Mammary epithelial cell (primary cell): ENCODE measurements at regions of chr3 and their contacts with region 1.

Region 1: DNA sequence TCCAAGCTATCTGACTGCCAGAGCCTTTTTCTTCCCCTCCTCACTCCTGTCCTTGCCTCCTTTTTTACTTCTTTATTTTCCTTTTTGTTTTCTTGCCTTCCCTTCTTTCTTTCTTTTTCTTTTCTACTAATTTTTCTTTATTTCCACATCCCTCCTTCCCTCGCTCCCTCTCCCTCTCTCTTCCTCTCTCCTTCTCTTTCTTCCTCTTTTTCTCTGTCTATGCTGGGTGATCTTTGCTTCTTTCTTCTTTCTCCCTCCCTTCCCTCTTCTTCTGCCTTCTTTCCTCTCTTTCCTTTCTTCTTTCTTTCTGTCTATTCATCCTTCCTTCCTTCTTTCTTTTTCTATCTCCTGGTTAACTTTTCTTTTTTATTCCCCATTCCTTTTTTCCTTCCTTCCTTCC is 564.8 kb downstream of the NSUN3 start:
- DNase-seq: no peak
- H3K4me3 ChIP-seq: no peak overlapping the region
- H3K27ac ChIP-seq: no peak overlapping the region
- H3K4me1 ChIP-seq: no peaks in the 10 kb centered on the region
- H3K27me3 ChIP-seq: no peaks in the 10 kb centered on the region
- CTCF ChIP-seq: no peak

Region 2: DNA sequence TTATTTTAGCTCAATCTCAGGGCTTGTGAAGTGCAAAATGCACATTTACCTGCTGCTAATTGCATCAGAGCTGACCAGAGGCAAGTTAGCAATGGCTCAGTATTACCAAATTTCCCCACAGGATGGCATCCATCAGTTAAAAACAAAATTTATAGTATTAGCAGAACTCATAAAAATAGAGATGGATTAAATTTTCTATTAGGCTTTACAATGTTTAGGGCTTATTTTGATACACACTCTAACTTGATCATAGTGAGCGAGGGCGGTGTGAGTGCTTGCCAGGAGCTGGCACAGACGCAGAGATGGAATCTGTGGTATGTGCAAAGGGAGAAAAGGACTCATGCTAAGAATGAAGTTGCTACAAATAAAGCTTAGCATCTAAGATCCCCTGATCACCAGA is 323.8 kb before region 1 on chr3:
- CTCF ChIA-PET with region 1: interaction called, 15 read pairs
- dilution Hi-C with region 1: no loop called
- in situ Hi-C with region 1: no loop called
- intact Hi-C with region 1: no loop called
- DNase-seq: no peak
- H3K4me3 ChIP-seq: no peak overlapping the region
- H3K27ac ChIP-seq: no peak overlapping the region
- H3K4me1 ChIP-seq: no peaks in the 10 kb centered on the region
- H3K27me3 ChIP-seq: no peaks in the 10 kb centered on the region
- CTCF ChIP-seq: peak; percentile 17 to 35

Region 3: DNA sequence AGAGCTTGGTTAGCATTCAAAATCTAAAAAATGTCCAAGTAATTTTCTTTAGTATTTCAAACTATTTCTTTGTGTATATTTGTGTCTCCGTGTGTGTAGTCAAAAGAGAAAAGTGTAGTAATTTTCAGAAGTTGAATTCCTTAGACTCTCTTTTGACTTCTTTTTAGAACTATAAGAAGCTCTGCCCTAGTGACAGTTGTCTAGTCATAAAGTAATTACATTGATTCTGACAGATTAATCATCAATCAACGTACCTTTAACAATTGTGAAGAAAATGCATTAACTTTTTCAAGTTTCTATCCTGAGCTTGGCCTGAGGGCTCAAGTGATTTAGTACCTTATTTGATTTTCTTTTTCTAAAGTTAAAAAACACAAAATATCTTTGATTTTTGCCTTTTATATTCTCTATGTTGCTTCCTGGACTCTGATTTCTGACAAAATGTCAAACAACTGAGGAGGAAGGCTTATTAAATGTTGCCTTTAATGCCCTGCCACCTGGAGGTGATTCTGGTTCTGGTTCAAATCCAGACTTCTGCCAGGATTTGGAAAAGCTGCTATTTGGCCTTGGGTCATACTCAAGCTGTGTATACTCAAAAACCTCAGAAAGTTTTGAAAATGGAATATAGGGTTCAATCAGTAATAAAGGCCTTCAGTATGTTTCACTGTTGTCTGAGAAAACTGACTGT is 88.8 kb after region 1 on chr3:
- CTCF ChIA-PET with region 1: no interaction called
- dilution Hi-C with region 1: no loop called
- in situ Hi-C with region 1: no loop called
- intact Hi-C with region 1: no loop called
- DNase-seq: no peak
- H3K4me3 ChIP-seq: no peak overlapping the region
- H3K27ac ChIP-seq: no peak overlapping the region
- H3K4me1 ChIP-seq: no peaks in the 10 kb centered on the region
- H3K27me3 ChIP-seq: no peaks in the 10 kb centered on the region
- CTCF ChIP-seq: peak in 1 of 2 donors; percentile 37